Ascending aorta (tissue), 2 donors: ENCODE measurements at regions of chr2 and their contacts with region 1.

Region 1: DNA sequence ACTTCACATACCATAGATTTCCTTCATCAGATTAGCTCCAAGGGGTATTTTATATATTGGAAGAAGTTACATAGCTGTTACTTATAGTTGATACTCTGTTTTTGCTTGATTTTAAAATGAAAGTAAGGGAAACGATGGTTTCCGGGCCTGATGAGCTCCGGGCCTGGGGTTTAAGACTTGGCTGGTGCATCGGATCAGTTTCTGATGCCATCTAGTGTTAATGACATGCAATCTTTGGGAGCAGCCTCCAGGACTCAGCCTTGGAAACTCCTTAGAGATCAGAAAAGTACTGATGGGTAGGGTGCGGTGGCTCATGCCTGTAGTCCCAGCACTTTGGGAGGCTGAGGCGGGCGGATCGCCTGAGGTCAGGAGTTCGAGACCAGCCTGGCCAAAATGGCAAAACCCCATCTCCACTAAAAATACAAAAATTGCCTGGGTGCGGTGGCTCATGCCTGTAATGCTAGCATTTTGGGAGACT is 47.1 kb upstream of the CNOT11 start:
- DNase-seq: peak in 1 of 2 donors; percentile 69
- H3K4me3 ChIP-seq: peak overlapping the region; percentile 16 to 40
- H3K27ac ChIP-seq: no peak overlapping the region
- H3K4me1 ChIP-seq: no peaks in the 10 kb centered on the region
- H3K27me3 ChIP-seq: no peaks in the 10 kb centered on the region
- CTCF ChIP-seq: peak; percentile 29 to 68 (median 53)

Region 2: DNA sequence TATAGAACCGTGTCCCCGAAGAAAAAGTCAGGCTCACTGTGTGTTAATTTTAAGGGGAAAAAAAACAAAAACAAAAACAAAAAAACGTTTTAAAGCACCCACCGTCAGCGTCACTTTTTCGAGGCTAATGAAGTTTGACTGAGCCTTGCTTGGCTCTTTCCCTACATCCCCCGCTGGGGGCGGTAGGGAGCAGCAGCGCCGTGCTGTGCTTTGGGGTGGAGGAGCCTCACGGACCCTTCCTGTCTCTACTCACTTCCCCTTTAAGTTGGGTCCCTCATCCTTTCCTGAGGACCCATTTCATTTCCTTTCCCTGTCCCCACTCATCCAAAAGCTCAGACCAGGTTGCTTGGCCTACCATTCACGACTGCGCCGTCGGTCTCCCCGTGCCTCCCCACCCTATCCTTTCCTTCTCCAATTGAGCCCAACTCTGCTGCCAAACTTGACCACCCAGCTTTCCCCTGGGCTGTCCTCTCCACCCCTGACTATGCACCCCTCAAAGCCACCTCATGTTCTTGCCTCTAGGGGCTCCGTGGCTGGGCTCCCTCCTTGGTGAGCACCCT is 286.2 kb before region 1 on chr2:
- intact Hi-C with region 1: no loop called
- DNase-seq: no peak
- H3K4me3 ChIP-seq: no peak overlapping the region
- H3K27ac ChIP-seq: no peak overlapping the region
- H3K4me1 ChIP-seq: peaks cover 4 to 6% of the 10 kb centered on the region in 2 donors
- H3K27me3 ChIP-seq: no peaks in the 10 kb centered on the region
- CTCF ChIP-seq: peak in 2 of 3 experiments; percentile 8 to 22

Region 3: DNA sequence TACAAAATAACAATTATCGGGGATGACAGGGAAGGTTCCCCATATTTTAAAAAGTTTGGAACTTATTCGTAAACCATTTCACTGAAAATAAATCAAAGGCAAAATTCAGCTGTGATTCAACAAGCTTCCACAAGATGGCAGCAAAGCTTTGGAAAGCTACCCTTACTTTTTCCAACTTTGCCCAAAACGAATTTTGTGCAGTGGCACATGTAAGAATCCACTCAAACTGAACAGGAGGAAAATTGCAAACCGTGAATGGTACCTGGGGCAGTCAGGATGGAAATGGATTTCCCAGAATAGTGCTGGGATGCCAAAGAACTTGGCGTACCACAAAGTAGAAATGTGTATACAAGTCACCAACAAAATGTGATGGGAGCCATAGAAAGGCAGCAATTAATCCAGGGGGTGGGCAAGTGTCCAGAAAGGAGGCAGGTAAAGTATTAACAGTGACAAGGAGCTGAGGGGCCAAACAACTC is 192.8 kb before region 1 on chr2:
- intact Hi-C with region 1: loop called (anchors 1 kb)
- DNase-seq: no peak
- H3K4me3 ChIP-seq: no peak overlapping the region
- H3K27ac ChIP-seq: no peak overlapping the region
- H3K4me1 ChIP-seq: no peaks in the 10 kb centered on the region
- H3K27me3 ChIP-seq: no peaks in the 10 kb centered on the region
- CTCF ChIP-seq: peak; percentile 78 to 86 (median 83)

Region 4: DNA sequence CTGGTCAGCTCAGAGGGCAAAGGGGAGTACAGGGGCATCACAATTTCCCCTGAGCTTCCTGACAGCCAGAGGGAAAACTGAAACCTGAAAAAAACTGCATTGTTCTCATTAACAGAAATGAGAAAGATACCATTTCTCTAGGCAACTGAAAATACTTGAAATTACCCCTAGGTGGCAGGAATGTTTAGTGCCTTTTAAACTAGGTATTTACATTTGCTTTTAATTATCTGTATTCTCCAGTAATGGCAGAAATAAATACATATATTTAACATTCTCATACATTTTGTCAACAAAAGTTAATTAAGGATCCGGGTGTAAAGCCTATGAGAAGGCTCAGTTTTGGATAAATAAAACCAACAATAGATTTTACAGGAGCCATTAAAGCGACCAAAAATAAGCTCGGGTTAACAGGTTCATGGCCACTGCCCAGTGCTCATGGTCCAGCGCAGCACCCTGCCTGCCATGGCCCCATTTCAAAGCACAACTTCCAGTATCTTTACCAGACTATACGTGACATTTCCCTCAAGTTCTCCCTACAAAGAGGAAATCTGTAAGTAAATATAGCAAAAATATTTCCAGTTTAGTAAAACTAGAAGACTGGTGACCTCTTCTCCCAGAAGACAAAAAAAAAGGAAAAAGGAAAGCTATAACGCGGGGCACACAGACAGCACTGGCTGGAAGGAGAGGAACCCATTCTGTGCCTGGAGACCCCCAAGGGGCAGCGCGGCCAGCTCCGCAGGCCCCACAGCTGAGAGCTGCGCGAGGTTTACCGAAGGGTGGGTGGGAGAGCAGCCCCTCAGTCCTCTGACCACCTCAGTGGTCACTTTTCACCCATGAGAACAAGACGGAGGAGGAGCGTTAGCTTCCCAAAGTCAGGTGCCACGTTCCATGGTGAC is 168.8 kb before region 1 on chr2:
- intact Hi-C with region 1: loop called (anchors 2 kb)
- DNase-seq: no peak
- H3K4me3 ChIP-seq: no peak overlapping the region
- H3K27ac ChIP-seq: no peak overlapping the region
- H3K4me1 ChIP-seq: no peaks in the 10 kb centered on the region
- H3K27me3 ChIP-seq: no peaks in the 10 kb centered on the region
- CTCF ChIP-seq: peak in 2 of 3 experiments; percentile 25 to 55

Region 5: GRCh38 chr2:101361121-101361870 is 155.7 kb after region 1 on chr2:
- intact Hi-C with region 1: no loop called
- DNase-seq: peak in 1 of 2 donors; percentile 35
- H3K4me3 ChIP-seq: no peak overlapping the region
- H3K27ac ChIP-seq: no peak overlapping the region
- H3K4me1 ChIP-seq: no peaks in the 10 kb centered on the region
- H3K27me3 ChIP-seq: no peaks in the 10 kb centered on the region
- CTCF ChIP-seq: no peak